Activated CD4-positive, alpha-beta T cell treated with anti-CD3 and anti-CD28 coated beads, Interleukin-2, amount 10 ng/mL, durations not matched to agents 7 days and 5 days (primary cell): ENCODE measurements at regions of chr4 and their contacts with region 1.

Region 1: GRCh38 chr4:88514557-88515511 is 8.7 kb downstream of the PYURF start:
- DNase-seq: no peak
- H3K4me3 Mint-ChIP-seq: no peak overlapping the region
- H3K27ac Mint-ChIP-seq: no peak overlapping the region
- H3K4me1 Mint-ChIP-seq: no peaks in the 10 kb centered on the region
- H3K27me3 Mint-ChIP-seq: peaks cover 5% of the 10 kb centered on the region

Region 2: DNA sequence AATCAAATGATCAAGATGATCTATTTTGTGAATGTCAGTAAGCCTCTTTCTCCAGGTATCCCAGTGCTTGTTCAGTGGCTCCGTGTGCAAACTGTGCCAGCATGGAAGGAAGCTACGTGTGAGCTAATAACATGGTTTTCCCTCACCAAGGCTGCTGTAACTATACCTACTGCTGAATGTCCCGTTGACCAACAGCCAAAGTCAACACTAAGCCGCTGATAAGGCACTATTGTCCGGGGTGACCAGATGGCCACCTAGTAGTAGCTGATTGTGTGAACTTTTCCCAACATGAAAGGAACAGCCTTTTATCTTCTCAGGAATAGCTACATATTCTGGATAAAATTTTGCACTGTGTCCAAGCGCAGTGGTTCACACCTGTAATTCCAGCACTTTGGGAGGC is 298.4 kb before region 1 on chr4:
- CTCF ChIA-PET with region 1: interaction called, 44 read pairs
- POLR2A ChIA-PET with region 1: no interaction called
- DNase-seq: no peak
- H3K4me3 Mint-ChIP-seq: no peak overlapping the region
- H3K27ac Mint-ChIP-seq: no peak overlapping the region
- H3K4me1 Mint-ChIP-seq: peaks cover 10% of the 10 kb centered on the region
- H3K27me3 Mint-ChIP-seq: peaks cover 11% of the 10 kb centered on the region